SK-N-SH (cell line): ENCODE measurements at regions of chr6 and their contacts with region 1.

Region 1: DNA sequence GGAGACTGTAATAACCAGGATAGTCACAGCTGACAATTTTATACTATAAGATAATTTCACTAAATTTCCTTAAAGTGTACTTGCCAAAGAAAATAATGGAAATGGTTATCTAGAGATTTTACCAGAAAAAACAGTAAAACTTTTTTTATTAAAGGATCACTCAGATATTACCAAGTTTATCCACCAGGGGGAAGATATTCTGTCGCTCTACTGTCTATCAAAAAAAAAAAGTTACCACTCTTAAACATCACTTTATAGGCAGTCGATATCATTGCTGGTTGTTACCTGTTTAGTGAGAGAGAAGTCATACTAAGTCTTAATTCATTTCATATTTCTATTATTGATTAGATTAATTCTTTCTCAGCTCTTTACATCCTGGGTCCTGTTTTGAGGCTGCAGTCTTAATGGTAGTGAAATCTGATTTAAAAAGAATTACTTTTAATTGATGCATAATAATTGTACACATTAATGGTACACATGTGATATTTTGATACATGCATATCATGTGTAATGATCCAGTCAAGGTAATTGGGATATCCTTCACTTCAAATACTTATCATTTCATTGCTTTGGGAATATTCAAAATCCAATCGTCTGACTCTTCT is 18.9 kb downstream of the L3MBTL3 start:
- DNase-seq: peak; percentile 4
- H3K4me3 ChIP-seq: no peak overlapping the region
- H3K27ac ChIP-seq: no peak overlapping the region
- H3K4me1 ChIP-seq: 0 out of 4 replicates have a peak, but pooled peaks cover 0 to 4% of the 10 kb centered on the region in 2 experiments
- H3K27me3 ChIP-seq: no peaks in the 10 kb centered on the region
- CTCF ChIP-seq: peak; percentile 70
- EP300 ChIP-seq: no peak
- RAD21 ChIP-seq: peak; percentile 20; the same call in 1 of the 2 replicates

Region 2: GRCh38 chr6:129370268-129370916 is 666.9 kb before region 1 on chr6:
- CTCF ChIA-PET with region 1: no interaction called
- POLR2A ChIA-PET with region 1: no interaction called
- DNase-seq: peak; percentile 24
- H3K4me3 ChIP-seq: peak overlapping the region in 1 of 2 experiments; percentile 43; a peak in 1 of 4 replicates
- H3K27ac ChIP-seq: no peak overlapping the region
- H3K4me1 ChIP-seq: no peaks in the 10 kb centered on the region
- H3K27me3 ChIP-seq: no peaks in the 10 kb centered on the region
- CTCF ChIP-seq: peak; percentile 90
- EP300 ChIP-seq: no peak
- RAD21 ChIP-seq: peak; percentile 51

Region 3: GRCh38 chr6:130020907-130021629 is 16.2 kb before region 1 on chr6:
- CTCF ChIA-PET with region 1: interaction called, 15 read pairs
- POLR2A ChIA-PET with region 1: no interaction called
- DNase-seq: peak; percentile 60
- H3K4me3 ChIP-seq: peak overlapping the region; percentile 64 to 86
- H3K27ac ChIP-seq: peak overlapping the region; percentile 56 to 87; a peak in 3 of 4 replicates
- H3K4me1 ChIP-seq: peaks cover 2 to 10% of the 10 kb centered on the region in 2 experiments
- H3K27me3 ChIP-seq: no peaks in the 10 kb centered on the region
- CTCF ChIP-seq: peak; percentile 85
- EP300 ChIP-seq: no peak
- RAD21 ChIP-seq: peak; percentile 81

Region 4: GRCh38 chr6:130047088-130047995 is 10.0 kb after region 1 on chr6:
- CTCF ChIA-PET with region 1: interaction called, 14 read pairs
- POLR2A ChIA-PET with region 1: no interaction called
- DNase-seq: no peak
- H3K4me3 ChIP-seq: no peak overlapping the region
- H3K27ac ChIP-seq: no peak overlapping the region
- H3K4me1 ChIP-seq: no peaks in the 10 kb centered on the region; a peak in 1 of 4 replicates
- H3K27me3 ChIP-seq: no peaks in the 10 kb centered on the region
- CTCF ChIP-seq: peak; percentile 43
- EP300 ChIP-seq: no peak
- RAD21 ChIP-seq: peak; percentile 13; the same call in 1 of the 2 replicates